AG04450 (cell line): ENCODE measurements at regions of chr5 and their contacts with region 1.

Region 1: DNA sequence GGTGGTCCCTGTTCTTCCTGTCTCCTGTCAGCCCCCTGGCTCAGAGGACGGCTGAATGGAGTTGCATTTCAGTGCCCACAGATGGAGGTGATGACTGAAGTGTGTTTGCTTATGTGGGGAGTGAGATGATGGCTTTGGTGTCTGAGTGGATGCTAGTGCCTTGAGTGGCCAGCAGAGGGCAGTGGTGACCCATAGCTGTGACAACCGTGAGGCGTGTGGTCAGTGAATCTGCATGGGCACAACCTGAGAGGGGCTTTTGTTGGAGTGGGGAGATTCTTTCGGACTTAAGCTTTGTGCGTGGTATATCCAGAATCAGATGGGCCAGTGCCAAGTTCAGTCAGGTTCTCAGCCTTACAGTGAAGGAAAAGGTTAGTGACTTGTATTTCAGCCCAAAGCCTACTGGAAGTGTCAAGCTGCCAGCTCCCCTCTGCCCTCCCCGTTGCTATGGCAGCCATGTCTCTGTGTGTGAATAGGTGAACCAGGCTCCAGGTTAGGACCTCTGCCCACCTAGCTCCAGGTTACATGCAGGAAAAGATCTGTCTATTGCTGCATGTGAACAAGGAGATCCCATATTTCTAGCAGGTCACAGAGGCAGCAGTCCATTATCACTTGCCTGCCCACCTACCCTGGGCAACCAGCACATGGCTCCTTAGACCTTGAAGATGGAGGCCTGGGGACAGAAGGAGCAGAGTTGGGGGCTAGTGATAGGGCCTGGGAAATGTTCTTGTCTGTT is 14.7 kb upstream of the CXXC5 start:
- DNase-seq: no peak
- H3K4me3 ChIP-seq: no peak overlapping the region
- H3K27ac ChIP-seq: no peak overlapping the region
- H3K27me3 ChIP-seq: no peaks in the 10 kb centered on the region
- CTCF ChIP-seq: peak; percentile 98

Region 2: DNA sequence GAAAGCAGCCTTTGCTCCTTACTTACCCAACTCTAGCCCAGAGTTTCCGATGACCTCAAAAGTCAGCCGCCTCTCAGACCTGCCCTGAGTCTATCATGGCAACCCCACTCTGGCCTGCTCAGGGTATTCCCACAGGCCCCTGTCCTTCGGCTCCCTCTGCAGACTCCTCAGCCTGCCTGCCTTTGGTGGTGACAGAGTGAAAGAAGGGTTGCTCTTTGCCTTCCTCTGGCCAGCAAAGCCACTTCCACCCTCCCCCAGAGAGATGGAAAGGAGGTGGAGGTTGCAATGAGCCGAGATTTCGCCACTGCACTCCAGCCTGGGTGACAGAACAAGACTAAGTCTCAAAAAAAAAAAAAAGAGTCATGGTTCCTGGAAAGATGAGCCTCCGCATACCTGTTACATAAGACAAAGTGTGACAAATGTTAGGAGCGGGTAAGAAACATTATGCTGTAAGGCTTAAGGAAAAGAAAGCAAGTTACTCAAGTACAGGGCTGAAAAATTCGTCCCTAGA is 165.0 kb before region 1 on chr5:
- CTCF ChIA-PET with region 1: no interaction called
- POLR2A ChIA-PET with region 1: no interaction called
- DNase-seq: no peak
- H3K4me3 ChIP-seq: no peak overlapping the region
- H3K27ac ChIP-seq: no peak overlapping the region
- H3K27me3 ChIP-seq: no peaks in the 10 kb centered on the region
- CTCF ChIP-seq: no peak; the same call in 1 of the 2 replicates

Region 3: DNA sequence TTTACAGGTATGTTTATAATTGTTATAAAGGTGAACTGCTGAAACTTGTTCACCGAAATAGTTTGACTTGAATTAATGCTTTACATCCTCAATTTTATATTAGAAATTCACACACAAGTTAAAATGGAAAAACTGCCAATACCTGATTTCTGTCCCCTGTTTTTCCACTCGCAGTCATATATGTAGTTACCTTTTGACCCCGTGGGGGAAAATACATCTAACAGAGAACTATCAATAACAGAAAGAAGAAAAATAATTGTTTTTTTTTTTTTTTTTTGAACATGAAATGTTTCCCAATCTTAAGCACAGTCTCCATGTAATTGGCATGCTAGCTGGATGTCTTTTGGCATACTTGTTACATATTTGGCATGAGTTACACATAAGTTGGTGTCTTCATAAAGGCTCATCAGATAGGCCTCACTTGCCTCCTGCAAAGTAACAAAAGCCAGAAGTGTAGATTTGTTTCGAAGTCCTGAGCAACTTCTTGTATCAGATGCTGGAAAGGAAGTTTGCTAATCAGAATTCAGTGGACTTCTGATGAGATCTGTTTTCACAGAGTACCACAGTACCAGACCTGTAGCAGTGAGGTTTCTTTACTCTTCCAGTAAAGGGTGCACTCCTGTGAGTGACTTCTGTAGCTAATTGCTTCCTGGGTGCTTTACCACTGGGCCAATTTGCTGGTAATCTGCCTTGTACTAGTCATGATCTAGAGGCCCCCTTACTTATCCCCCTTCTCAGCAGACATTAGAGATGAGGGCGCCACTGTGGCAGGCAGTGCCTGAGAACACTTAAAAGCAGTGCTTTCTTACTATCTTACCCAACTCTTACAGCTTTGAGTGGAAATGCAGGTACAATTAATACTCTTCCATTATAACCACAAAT is 21.5 kb before region 1 on chr5:
- CTCF ChIA-PET with region 1: interaction called, 10 read pairs
- POLR2A ChIA-PET with region 1: no interaction called
- DNase-seq: no peak
- H3K4me3 ChIP-seq: no peak overlapping the region
- H3K27ac ChIP-seq: no peak overlapping the region
- H3K27me3 ChIP-seq: no peaks in the 10 kb centered on the region
- CTCF ChIP-seq: no peak

Region 4: DNA sequence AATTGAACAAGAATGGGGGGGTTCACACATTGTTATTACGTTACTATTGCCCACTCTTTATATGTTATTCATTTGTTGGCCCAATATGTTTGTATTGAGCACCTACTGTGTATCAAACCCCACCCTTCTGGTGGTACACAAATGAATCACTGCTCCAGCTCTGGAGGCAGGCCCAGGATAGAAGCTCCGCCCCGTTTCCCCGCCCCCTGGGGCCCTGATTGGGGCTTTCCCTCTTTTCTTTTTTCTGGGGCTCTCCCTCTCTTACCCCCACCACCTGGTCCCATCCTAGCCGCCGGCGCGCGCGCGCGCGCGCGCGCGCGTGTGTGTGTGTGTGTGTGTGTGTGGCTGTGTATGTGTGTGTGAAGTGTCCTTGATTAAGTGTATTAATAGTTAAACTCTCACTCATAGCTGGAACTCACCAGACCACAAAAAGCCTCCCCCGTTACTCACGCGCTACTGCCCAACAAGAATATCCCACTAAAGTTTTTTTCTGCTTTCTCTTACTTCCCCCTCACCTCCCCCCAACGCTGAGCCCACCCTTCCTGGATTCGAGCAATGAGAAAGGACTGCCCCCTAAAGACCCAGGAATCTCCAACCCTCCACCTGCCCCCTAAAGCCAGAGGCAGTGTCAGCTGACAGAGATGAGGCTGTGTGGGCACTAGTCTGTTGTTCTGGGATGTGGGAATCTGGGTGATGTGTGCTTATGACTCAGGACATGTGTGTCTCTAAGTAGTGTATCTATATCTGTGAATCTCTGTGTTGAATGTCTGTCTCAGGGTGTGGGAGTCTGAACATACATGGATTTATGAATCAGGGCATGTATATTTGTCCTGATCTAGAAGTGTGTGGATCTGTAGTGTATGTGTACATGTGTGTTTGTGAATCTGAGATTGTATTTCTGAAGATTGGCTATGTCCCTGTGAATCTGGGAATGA is 18.7 kb after region 1 on chr5:
- CTCF ChIA-PET with region 1: interaction called, 19 read pairs
- POLR2A ChIA-PET with region 1: interaction called, 57 read pairs
- DNase-seq: no peak
- H3K4me3 ChIP-seq: peak overlapping the region; percentile 80
- H3K27ac ChIP-seq: peak overlapping the region; percentile 96
- H3K27me3 ChIP-seq: no peaks in the 10 kb centered on the region
- CTCF ChIP-seq: no peak

Region 5: DNA sequence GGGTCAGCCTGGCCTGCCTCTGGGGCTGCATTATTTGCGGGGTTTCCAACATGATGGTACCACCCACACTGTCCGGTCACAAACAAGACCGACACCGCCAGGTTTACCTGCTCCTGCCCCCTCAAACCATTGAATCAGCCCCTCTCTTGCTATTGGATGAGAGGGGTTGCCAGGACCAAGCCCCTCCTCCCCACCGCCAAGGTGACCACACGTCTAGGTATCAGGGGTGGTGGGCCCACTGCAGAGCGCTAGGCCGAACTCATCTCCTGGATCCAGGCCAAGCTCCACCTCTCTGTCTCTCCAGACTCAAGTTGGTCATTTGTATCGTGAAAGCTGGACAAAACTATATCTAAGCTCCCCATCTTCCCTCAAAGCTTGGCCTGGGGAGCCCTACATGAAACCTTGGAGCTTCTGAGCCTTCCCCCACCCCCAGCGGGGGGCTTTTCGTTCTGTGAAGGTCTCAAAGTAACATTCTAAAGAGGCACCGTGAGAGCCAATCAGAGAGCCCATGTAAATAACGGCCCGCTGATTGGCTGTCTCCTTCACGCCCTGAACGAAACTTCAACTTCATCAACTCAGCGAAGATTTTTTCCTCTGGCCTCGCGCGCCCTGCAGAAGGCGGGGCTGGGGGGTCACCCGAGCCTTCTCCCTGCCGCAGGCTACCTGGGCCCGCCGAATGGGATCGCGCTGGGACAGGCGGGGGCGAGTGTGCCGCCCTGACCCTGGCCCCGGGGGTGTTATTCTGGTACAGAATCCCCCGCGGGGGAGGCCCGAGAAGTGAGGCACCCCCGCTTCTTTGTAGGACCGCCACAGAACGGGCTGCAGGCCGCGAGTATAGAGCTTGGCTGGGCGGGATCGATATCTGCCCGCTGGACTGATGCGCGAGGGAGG is 112.6 kb after region 1 on chr5:
- CTCF ChIA-PET with region 1: interaction called, 10 read pairs
- POLR2A ChIA-PET with region 1: interaction called, 8 read pairs
- DNase-seq: no peak
- H3K4me3 ChIP-seq: peak overlapping the region; percentile 40
- H3K27ac ChIP-seq: peak overlapping the region; percentile 11
- H3K27me3 ChIP-seq: peaks cover 3% of the 10 kb centered on the region
- CTCF ChIP-seq: no peak

Region 6: DNA sequence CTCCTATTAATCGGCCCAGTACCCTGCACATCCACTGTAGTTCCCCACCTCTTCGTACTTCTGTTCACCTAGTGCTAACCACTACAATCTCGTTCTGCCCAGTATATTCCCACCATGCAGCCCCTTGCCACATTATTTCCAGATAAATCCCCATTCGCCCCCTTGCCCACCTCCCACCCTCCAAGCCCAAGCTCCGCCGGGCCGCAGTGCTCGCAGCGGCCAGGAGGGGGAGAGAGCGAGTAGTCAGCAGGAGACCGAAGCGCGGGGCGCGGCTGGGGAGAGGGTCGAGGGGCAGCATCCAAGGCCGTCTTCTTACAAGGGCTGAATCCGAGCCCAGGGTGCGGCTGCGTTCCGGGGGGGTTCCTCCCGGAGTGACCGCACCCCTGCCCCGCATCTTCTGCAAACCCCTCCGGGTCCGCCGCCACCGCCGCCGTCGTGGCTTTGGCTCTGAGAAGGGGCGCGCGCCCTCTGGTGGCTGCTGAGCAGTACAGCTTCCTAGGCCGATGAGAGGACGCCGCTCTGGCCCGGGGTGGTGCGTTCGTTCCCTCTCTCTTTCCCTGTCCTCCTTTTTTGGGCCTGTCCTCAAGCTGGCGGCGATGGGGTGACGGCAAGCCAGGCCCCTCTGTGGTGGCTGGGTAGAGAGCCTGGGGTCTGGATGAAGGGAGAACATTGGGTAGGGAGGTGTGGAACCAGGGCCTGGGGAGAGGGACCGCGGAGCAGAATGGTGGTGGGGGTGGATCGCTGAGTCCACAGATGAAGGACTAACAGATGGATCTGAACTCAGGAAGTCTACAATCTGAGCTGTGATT is 132.2 kb after region 1 on chr5:
- CTCF ChIA-PET with region 1: interaction called, 314 read pairs
- POLR2A ChIA-PET with region 1: interaction called, 3 read pairs
- DNase-seq: no peak
- H3K4me3 ChIP-seq: peak overlapping the region; percentile 71
- H3K27ac ChIP-seq: no peak overlapping the region
- H3K27me3 ChIP-seq: peaks cover 19% of the 10 kb centered on the region
- CTCF ChIP-seq: peak; percentile 83

Region 7: DNA sequence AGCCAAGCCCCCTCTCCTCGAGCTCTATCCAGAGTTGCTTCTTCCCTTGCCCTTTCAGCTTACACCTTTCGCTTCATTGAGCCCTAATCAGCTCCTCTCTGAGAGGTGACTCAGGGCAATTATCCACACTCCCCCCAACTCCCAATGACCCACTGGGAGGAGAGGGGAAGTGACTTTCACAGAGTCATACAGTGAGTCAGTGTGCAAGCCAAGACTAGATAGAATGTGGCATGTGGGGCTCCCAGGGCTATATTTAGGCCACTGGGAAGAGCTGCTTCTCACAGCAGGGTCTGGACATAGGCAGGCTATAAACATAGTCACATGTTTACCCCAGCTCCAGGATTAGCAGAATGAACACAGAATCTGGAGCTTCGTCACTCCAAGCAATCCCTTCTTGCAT is 352.3 kb after region 1 on chr5:
- CTCF ChIA-PET with region 1: no interaction called
- POLR2A ChIA-PET with region 1: no interaction called
- DNase-seq: peak; percentile 3
- H3K4me3 ChIP-seq: no peak overlapping the region
- H3K27ac ChIP-seq: no peak overlapping the region
- H3K27me3 ChIP-seq: peaks cover 17% of the 10 kb centered on the region
- CTCF ChIP-seq: no peak